IMR-90 (cell line): ENCODE measurements at regions of chr5 and their contacts with region 1.

Region 1: DNA sequence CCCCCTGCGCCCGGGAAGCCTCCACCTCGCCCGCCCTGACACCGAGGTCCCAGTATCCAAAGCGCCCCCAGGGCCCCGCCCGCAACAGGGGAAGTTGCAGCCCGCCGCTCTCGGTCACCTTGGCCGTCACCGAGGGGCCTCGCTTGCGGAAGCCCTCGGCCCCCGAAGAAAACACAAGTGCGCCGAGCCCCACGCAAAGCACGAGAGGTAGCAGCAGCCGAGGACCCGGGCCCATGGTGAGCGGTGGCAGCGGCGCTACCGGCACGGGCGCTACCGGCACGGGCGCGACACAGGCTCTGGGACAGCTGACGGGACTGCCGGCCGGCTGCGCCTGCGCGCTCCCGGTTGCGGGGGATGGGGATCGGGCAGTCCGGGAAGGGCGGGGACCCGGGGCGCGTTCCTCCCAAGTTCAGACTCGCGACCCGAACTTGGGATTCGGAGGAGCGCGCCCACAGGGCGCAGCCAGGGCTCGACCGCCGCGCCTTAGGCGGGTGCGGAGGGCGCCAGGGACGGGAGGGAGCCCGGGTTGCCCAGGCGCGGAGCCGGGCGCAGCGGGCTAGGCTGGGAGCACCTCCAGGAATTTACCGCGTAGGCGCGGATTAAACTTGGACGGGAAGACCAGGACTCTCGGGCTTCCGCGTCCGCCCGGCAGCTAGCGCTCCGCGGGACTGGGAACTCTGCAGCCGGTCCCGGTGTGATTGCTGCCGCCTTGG is at the start of gene PPIC:
- DNase-seq: peak; percentile 71
- ATAC-seq: peak; percentile 93
- H3K4me3 ChIP-seq: peak within 1 kb of the TSS; percentile 79
- H3K27ac ChIP-seq: peak within 1 kb of the TSS; percentile 74
- H3K4me1 ChIP-seq: no peaks in the 10 kb centered on the region; the same call in 1 of the 2 replicates
- H3K27me3 ChIP-seq: no peaks in the 10 kb centered on the region
- CTCF ChIP-seq: no peak
- POLR2A ChIP-seq: no peak; the same call in 1 of the 2 replicates
- RAD21 ChIP-seq: no peak
- total RNA-seq, gene PPIC: 20.6 and 36.9 TPM in 2 replicates

Region 2: DNA sequence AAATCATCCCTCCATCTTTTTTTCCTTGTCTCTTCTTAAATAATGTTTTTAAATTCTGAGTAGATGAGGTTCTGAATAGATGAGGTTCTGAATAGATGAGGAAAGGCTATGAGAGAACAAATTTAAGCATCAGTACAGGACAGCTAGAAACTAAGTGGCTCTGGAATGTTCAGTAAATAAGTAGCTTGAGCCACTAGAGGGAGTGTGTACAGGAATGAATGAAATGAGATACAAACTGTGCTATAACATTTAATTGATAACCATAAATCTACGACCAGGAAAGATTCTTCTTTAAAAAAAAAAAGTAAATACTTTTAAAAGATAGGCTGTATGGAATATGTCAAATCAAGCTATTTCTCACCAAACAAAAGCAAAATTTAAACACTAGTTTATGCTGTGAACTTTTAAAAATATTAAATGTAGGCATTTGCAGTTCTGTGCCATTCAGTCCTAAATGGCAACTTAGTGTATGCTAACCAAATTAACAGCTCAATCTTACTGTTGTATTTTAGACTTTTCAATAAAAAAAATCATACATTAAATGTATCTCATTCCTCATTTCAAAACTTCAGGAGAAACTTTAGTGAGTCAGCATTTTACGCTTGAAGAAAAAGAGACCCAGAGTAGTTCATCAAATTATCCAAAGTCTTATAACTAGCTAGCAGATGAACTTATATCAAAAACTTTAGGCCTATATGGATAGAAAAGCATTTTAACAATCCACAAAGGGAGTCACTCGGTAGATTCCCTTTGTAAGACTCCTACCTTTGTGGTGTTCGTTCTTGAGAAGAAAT is 332.1 kb before region 1 on chr5:
- CTCF ChIA-PET with region 1: interaction called, 3 read pairs
- POLR2A ChIA-PET with region 1: no interaction called
- dilution Hi-C with region 1: no loop called
- in situ Hi-C with region 1: no loop called
- intact Hi-C with region 1: loop called (anchors 2 kb)
- DNase-seq: peak; percentile 67
- ATAC-seq: peak; percentile 87
- H3K4me3 ChIP-seq: no peak overlapping the region
- H3K27ac ChIP-seq: no peak overlapping the region
- H3K4me1 ChIP-seq: no peaks in the 10 kb centered on the region
- H3K27me3 ChIP-seq: peaks cover 2% of the 10 kb centered on the region; the same call in 1 of the 2 replicates
- CTCF ChIP-seq: peak; percentile 67
- POLR2A ChIP-seq: no peak
- RAD21 ChIP-seq: peak; percentile 58

Region 3: GRCh38 chr5:122985954-122986721 is 50.4 kb before region 1 on chr5:
- CTCF ChIA-PET with region 1: no interaction called
- POLR2A ChIA-PET with region 1: no interaction called
- dilution Hi-C with region 1: no loop called
- in situ Hi-C with region 1: no loop called
- intact Hi-C with region 1: no loop called
- DNase-seq: no peak
- ATAC-seq: no peak
- H3K4me3 ChIP-seq: no peak overlapping the region
- H3K27ac ChIP-seq: no peak overlapping the region
- H3K4me1 ChIP-seq: peaks cover 1% of the 10 kb centered on the region; the same call in 1 of the 2 replicates
- H3K27me3 ChIP-seq: no peaks in the 10 kb centered on the region
- CTCF ChIP-seq: no peak
- POLR2A ChIP-seq: no peak
- RAD21 ChIP-seq: no peak

Region 4: DNA sequence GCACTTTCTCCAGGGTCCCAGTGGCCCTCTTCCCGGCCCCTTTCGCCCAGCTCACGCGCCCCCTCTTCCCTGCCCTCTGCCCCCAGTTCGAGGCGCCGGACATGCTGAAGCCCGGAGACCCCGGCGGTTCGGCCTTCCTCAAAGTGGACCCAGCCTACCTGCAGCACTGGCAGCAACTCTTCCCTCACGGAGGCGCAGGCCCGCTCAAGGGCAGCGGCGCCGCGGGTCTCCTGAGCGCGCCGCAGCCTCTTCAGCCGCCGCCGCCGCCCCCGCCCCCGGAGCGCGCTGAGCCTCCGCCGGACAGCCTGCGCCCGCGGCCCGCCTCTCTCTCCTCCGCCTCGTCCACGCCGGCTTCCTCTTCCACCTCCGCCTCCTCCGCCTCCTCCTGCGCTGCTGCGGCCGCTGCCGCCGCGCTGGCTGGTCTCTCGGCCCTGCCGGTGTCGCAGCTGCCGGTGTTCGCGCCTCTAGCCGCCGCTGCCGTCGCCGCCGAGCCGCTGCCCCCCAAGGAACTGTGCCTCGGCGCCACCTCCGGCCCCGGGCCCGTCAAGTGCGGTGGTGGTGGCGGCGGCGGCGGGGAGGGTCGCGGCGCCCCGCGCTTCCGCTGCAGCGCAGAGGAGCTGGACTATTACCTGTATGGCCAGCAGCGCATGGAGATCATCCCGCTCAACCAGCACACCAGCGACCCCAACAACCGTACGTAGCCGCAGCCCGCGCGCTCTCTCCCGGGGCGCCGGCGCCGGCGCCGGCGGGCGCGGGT is 53.5 kb after region 1 on chr5:
- CTCF ChIA-PET with region 1: no interaction called
- POLR2A ChIA-PET with region 1: no interaction called
- dilution Hi-C with region 1: no loop called
- in situ Hi-C with region 1: no loop called
- intact Hi-C with region 1: loop called (anchors 2 kb)
- DNase-seq: peak; percentile 27
- ATAC-seq: peak; percentile 52
- H3K4me3 ChIP-seq: peak overlapping the region; percentile 58
- H3K27ac ChIP-seq: peak overlapping the region; percentile 22; the same call in 1 of the 2 replicates
- H3K4me1 ChIP-seq: peaks cover 7% of the 10 kb centered on the region; the same call in 1 of the 2 replicates
- H3K27me3 ChIP-seq: peaks cover 61% of the 10 kb centered on the region
- CTCF ChIP-seq: no peak
- POLR2A ChIP-seq: no peak
- RAD21 ChIP-seq: no peak

Region 5: DNA sequence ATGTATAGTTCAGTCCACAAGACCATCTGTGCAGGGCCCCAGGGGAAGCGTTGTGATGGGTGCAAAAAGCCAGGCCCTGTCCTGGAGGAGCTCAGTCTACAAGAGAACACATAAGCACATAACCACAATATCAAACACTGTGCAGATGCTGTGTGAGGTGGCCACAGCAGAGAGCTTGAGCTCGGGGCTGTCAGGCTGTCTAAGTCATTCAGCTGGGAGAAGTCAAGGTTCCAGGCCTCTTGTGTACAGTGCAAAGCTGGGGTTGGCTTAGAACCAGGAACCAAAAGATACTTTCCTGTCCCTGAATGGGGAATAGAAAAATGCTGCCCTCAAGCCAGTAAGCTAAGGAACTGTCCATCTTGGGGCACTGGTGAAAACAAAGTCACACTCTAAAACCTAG is 127.5 kb after region 1 on chr5:
- CTCF ChIA-PET with region 1: no interaction called
- POLR2A ChIA-PET with region 1: no interaction called
- dilution Hi-C with region 1: no loop called
- in situ Hi-C with region 1: no loop called
- intact Hi-C with region 1: no loop called
- DNase-seq: peak; percentile 31
- ATAC-seq: peak; percentile 75
- H3K4me3 ChIP-seq: no peak overlapping the region
- H3K27ac ChIP-seq: no peak overlapping the region
- H3K4me1 ChIP-seq: no peaks in the 10 kb centered on the region
- H3K27me3 ChIP-seq: peaks cover 19% of the 10 kb centered on the region
- CTCF ChIP-seq: no peak
- POLR2A ChIP-seq: no peak
- RAD21 ChIP-seq: no peak

Region 6: GRCh38 chr5:123303802-123304201 is 267.3 kb after region 1 on chr5:
- CTCF ChIA-PET with region 1: no interaction called
- POLR2A ChIA-PET with region 1: interaction called, 13 read pairs
- dilution Hi-C with region 1: no loop called
- in situ Hi-C with region 1: no loop called
- intact Hi-C with region 1: no loop called
- DNase-seq: no peak
- ATAC-seq: no peak
- H3K4me3 ChIP-seq: no peak overlapping the region
- H3K27ac ChIP-seq: no peak overlapping the region
- H3K4me1 ChIP-seq: no peaks in the 10 kb centered on the region
- H3K27me3 ChIP-seq: peaks cover 4% of the 10 kb centered on the region; the same call in 1 of the 2 replicates
- CTCF ChIP-seq: no peak
- POLR2A ChIP-seq: no peak
- RAD21 ChIP-seq: no peak

Region 7: GRCh38 chr5:123359454-123360200 is 323.1 kb after region 1 on chr5:
- CTCF ChIA-PET with region 1: no interaction called
- POLR2A ChIA-PET with region 1: no interaction called
- dilution Hi-C with region 1: no loop called
- in situ Hi-C with region 1: no loop called
- intact Hi-C with region 1: loop called (anchors 5 kb)
- DNase-seq: no peak
- ATAC-seq: no peak
- H3K4me3 ChIP-seq: no peak overlapping the region
- H3K27ac ChIP-seq: peak overlapping the region; percentile 37; the same call in 1 of the 2 replicates
- H3K4me1 ChIP-seq: no peaks in the 10 kb centered on the region
- H3K27me3 ChIP-seq: no peaks in the 10 kb centered on the region
- CTCF ChIP-seq: no peak
- POLR2A ChIP-seq: no peak
- RAD21 ChIP-seq: no peak